Panc1 (cell line): ENCODE measurements at regions of chr17 and their contacts with region 1.

Region 1: GRCh38 chr17:70060415-70060814 is 14.6 kb upstream of the KCNJ16 start:
- DNase-seq: no peak
- ATAC-seq: no peak
- H3K4me3 ChIP-seq: no peak overlapping the region
- H3K27ac ChIP-seq: no peak overlapping the region
- H3K4me1 ChIP-seq: no peaks in the 10 kb centered on the region
- H3K27me3 ChIP-seq: no peaks in the 10 kb centered on the region
- CTCF ChIP-seq: no peak

Region 2: DNA sequence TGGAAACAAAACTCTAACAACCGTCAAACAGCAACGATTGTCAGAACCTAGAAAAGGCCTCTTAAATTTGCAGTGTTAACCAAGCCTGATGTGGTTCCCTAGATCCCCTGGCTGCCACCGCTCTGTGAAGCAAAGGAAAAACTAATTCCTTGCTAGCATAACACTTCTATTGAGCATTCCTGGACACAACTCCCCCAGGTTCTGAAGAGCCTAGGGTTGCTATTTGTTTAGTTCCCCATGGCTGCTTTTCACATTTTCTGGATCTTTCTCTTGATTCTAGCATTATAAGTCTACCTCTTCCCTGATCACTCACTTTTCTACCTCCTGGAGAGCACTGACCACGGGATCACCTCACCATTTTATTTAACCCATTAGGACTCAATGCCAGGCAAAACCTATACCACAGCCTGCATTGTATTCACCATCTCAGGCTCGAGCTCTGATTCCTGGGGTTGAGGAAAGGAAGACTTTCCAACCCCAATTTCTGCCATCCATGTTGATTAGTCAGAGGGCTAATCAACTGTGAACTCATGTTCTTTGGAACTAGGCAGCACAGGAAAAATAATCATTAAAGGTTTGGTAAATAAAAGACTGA is 13.9 kb after region 1 on chr17:
- CTCF ChIA-PET with region 1: no interaction called
- POLR2A ChIA-PET with region 1: interaction called, 11 read pairs
- in situ Hi-C with region 1: no loop called
- intact Hi-C with region 1: no loop called
- DNase-seq: no peak
- ATAC-seq: no peak
- H3K4me3 ChIP-seq: no peak overlapping the region
- H3K27ac ChIP-seq: no peak overlapping the region
- H3K4me1 ChIP-seq: no peaks in the 10 kb centered on the region
- H3K27me3 ChIP-seq: 0 out of 2 replicates have a peak, but pooled peaks cover 3% of the 10 kb centered on the region
- CTCF ChIP-seq: no peak

Region 3: DNA sequence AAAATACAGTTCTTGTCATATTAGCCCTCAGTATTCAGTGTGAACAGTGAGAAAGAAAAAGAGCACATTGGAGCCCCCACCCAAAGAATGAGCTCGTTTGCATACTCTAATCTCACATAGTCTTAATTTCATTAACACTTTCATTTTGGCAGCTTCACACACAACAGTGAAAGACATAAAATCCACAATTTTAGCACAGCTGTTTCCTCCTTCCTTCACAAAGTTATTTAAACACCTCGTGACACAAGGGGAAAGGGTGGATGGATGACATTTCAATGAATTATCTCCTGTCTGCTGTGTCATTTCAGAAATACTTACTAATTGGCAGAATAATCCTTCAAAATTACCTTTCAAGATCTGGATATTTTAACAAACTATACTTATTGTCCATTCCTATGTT is 408.2 kb after region 1 on chr17:
- CTCF ChIA-PET with region 1: no interaction called
- POLR2A ChIA-PET with region 1: no interaction called
- in situ Hi-C with region 1: no loop called
- intact Hi-C with region 1: no loop called
- DNase-seq: no peak
- ATAC-seq: no peak
- H3K4me3 ChIP-seq: no peak overlapping the region
- H3K27ac ChIP-seq: no peak overlapping the region
- H3K4me1 ChIP-seq: no peaks in the 10 kb centered on the region
- H3K27me3 ChIP-seq: no peaks in the 10 kb centered on the region
- CTCF ChIP-seq: no peak